Ovary (tissue), 10 donors: ENCODE measurements at regions of chr17 and their contacts with region 1.

Region 1: GRCh38 chr17:21457051-21458026 is 81.2 kb downstream of the KCNJ12 start:
- DNase-seq: peak; percentile 74 to 91 (median 78)
- H3K4me3 ChIP-seq: no peak overlapping the region
- H3K27ac ChIP-seq: no peak overlapping the region
- H3K4me1 ChIP-seq: peaks cover 3% of the 10 kb centered on the region
- H3K27me3 ChIP-seq: no peaks in the 10 kb centered on the region
- CTCF ChIP-seq: peak; percentile 23 to 61 (median 24)
- EP300 ChIP-seq: no peak
- POLR2A ChIP-seq: no peak

Region 2: DNA sequence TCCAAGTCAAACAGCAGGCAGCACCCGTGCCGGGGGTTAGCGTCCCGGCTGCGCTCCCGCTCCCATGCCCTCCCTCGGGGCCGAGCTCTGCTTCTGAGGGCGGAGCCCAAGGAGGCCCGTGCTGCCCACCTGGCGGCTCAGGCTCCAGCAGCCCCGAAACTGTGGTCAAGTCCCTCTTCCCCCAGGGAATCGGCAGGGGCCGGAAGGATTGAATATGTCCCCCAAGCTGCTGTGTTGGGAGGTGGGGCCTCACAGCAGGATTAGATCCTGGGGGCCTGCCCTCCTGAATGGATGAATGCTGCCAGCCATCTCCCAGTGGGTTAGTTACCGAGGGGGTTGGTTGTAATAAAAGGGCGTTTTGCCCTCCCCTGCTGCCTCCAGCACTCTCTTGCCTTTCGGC is 138.9 kb before region 1 on chr17:
- intact Hi-C with region 1: loop called in 1 of 4 experiments (anchors 10 kb)
- DNase-seq: peak in 3 of 5 donors; percentile 9 to 37 (median 31)
- H3K4me3 ChIP-seq: no peak overlapping the region
- H3K27ac ChIP-seq: no peak overlapping the region
- H3K4me1 ChIP-seq: no peaks in the 10 kb centered on the region
- H3K27me3 ChIP-seq: no peaks in the 10 kb centered on the region
- CTCF ChIP-seq: no peak
- EP300 ChIP-seq: no peak
- POLR2A ChIP-seq: no peak

Region 3: DNA sequence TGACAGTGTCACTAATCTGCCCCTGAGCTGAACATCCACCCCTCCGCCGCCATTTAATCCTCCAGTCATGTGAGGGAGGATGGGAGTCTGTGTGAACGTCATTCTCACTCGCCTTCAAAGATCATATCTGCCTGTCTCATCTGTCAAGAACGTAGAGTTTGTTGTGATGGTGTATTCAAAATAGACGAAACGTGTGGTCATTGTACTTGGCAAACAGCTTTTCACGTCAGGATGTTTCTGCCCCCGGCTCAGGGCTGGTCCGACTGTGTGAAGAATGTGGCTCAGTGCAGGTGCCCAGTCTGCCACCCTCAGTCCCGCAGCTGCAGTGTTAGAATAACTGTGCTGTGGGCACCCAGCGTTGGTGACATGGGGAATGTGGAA is 66.9 kb after region 1 on chr17:
- intact Hi-C with region 1: no loop called
- DNase-seq: no peak
- H3K4me3 ChIP-seq: no peak overlapping the region
- H3K27ac ChIP-seq: no peak overlapping the region
- H3K4me1 ChIP-seq: no peaks in the 10 kb centered on the region
- H3K27me3 ChIP-seq: no peaks in the 10 kb centered on the region
- CTCF ChIP-seq: no peak
- EP300 ChIP-seq: no peak
- POLR2A ChIP-seq: no peak